ENCODE measurements at regions of chr19 and their contacts with region 1.

Region 1: GRCh38 chr19:32971715-32972540 is at the starts of genes CEP89 and FAAP24:
- DNase-seq: peak; percentile 97
- ATAC-seq: peak; percentile 99
- total RNA-seq, gene CEP89: 7.7 TPM
- total RNA-seq, gene FAAP24: 0.75 TPM

Region 2: DNA sequence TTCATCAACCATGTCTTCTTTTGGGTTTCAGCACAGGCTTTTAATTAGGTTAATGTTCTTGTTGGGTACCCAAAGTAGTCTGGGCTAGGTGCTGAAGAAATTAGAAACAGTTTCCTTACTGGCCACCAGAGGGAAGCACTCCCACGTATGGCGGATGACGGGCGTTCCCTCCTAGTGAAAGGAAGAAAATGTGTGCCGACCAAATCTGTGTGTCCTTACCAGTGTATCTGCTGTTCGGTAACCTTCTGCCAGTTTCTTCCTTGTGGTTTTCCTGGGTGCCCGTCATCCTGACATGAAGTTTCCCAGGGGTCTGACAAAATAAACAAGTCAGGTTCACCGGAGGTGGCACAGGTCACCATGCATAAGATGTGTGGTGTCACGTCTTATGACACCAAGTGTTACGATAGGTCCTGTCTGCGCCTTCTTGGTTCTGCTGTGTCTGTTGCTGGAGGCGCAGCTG is 154.0 kb after region 1 on chr19:
- intact Hi-C with region 1: loop called (anchors 10 kb)
- DNase-seq: no peak
- ATAC-seq: peak; percentile 89

Region 3: DNA sequence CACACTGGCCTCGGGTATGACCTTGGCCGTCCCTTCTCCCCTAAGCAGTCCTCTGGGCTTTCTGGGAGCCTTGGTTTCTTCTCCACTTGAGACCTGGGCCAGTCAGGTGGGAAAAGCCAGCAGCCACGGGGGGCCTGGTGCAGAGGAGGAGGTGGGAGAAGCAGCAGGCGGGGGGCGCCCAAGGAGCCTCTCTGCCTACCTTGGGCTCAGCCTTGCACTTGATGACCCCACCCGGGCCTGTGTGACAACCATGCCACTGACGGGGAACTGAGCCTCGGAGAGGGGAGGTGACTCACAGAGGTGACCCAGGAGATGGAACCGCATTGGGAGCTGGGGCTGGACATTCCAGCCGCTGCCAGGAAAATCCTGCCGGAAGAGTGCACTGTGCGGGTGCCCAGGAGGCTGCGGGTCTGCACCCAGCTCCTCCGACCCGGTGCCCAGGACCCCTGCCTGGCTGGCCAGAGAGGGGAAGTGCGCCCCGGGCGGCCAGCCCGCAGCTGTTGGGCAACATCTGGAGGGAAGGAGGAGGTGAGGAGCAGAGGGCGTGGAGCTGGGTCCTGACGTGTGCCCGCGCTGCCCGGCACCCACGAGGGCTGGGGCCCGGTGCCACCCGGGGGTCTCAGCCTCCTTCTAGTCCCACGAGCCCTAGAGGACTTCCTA is 277.2 kb after region 1 on chr19:
- intact Hi-C with region 1: no loop called
- DNase-seq: peak; percentile 68
- ATAC-seq: peak; percentile 73

Measured in Right ventricle myocardium superior (tissue), 1 donor.